ENCODE measurements at regions of chr3 and their contacts with region 1.

Region 1: DNA sequence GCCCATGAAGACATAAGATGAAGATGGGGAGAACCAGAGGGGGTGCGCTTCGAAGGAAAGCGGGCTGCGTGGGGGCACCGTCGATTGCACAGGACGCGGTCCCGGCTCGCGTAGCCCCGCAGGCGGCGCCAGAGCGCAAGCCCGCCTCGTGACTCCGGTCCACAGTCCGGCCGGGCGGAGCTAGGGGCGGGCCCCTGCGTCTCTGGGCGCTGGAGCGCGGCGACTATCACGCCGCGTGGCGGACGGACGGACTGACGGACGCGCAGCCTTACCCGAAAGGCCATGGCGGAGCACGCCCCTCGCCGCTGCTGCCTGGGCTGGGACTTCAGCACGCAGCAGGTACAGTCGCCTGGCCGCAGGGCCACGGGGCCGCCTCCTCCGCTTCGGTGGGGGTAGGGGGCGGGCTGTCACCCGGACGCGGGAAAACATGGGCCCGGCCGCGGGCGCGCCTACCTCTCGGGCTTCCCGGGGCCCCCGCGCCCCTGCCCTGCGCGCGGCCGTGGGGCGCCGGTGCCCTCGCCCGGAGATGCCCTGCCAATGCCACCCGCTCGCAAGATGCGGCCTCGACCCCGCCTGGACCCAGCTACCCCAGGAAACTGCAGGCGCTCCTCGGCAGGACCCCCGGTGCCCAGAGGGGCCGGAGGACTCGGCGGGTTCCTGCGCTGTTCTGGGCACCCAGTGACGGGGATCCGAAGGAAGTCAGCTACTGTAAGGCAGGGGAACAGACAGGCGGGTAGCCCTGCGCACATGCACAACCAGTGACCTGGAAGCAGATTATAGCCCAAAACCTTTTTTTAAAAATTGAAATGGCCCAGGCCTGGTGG is at the start of gene XYLB:
- DNase-seq: peak; percentile 70 to 98 (median 82)

Region 2: DNA sequence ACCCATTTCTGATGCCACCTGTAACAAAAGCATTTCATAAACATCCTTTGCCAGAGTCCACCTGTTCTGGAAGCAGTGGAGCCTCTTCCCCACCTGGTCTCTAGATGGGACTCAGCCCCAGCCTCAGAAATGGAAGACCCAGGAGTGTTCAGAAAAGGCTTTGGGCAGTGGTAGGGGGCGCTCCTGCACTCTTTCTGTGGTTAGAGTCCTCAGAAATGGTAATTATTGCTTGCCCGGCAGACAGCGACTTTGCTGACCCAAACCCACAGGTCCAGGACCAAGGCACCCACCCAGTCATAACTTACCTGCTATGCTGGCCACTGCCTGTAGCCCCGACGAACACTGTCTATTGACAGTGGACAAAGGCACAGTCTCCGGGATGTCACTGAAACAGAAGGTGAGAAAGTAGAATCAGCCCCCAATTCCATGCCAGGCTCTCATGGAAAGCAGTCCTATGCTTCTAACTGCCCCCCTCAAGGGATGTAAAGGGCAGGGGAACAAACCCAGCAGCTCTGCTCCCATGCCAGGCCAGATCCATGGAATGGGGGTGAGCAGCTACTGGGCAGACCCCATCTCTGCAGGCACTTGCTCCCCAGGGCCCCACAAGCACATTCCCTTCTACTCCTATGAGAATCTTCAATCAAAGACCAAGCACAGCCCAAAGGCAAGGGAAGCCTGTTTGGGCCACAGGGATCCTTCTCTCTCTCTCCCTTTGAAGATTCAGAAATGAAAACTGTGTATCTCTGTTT is 215.0 kb before region 1 on chr3:
- intact Hi-C with region 1: no loop called
- DNase-seq: peak in 3 of 10 donors; percentile 35 to 77 (median 72)

Region 3: DNA sequence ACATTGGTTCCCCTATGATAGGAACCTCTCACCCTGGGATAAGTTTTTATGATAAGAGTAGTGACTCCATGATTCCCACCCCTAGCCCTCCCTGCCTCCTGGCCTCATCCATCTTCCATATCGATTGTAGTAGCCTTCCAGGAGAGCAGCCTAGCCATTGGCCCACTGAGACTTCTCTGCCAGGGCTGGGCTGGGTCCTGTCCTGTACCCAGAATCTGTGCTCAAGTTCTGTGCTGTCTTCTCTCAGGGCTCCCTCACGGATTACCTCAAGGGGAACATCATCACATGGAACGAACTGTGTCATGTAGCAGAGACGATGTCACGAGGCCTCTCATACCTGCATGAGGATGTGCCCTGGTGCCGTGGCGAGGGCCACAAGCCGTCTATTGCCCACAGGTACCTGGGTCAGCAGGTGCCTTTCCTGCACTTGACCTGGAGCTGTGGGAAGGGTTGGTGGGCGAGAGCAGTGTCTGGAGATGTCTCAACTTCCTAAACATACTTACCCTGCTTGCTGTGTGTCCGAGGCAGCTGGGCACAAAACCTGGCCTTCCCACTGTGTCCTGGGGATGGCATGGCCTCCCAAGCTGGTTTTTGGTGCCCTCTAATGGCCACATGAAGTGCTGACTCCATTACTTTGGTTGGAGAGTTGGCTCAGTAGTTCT is 132.8 kb after region 1 on chr3:
- intact Hi-C with region 1: loop called (anchors 2 kb)
- DNase-seq: peak in 9 of 10 donors; percentile 53 to 94 (median 73)